ENCODE measurements at regions of chr20 and their contacts with region 1.

Region 1: DNA sequence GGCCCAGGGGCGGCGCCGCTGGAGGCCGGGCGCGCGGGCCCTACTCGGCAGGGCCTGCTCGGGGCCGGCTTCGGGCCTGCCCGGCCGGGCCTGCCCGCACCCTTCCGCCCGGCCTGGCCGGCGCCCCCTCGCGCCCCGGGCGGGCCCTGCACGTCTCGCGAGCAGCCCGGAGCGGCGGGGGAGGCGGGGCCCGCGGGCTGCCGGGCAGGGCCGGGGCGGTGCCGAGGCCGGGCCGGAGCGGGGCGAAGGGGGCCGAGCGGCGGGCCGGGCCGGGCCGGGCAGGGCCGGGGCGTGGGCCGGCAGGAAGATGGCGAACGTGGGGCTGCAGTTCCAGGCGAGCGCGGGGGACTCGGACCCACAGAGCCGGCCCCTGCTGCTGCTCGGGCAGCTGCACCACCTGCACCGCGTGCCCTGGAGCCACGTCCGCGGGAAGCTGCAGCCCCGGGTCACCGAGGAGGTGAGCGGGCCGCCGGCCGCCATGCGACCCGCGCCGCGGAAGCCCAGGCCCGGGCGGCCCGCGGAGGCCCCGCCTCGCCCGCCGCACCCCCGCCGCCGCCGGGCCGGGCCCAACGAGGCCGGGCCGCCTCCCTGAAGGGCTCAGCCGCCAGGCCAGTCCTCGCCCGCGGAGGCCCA is at the start of gene NPEPL1:
- DNase-seq: peak; percentile 74
- ATAC-seq: peak; percentile 98
- H3K4me3 Mint-ChIP-seq: peak within 1 kb of the TSS; percentile 75
- H3K27ac Mint-ChIP-seq: no peak within 1 kb of the TSS
- H3K4me1 Mint-ChIP-seq: peaks cover 7% of the 10 kb centered on the region
- H3K27me3 Mint-ChIP-seq: no peaks in the 10 kb centered on the region
- CTCF ChIP-seq: no peak
- total RNA-seq, gene NPEPL1: 18.7 and 21.5 TPM in 2 replicates

Region 2: GRCh38 chr20:58618351-58619076 is 74.2 kb before region 1 on chr20:
- CTCF ChIA-PET with region 1: no interaction called
- POLR2A ChIA-PET with region 1: interaction called, 11 read pairs
- intact Hi-C with region 1: no loop called
- DNase-seq: no peak
- ATAC-seq: no peak
- H3K4me3 Mint-ChIP-seq: no peak overlapping the region
- H3K27ac Mint-ChIP-seq: no peak overlapping the region
- H3K4me1 Mint-ChIP-seq: no peaks in the 10 kb centered on the region
- H3K27me3 Mint-ChIP-seq: peaks cover 27% of the 10 kb centered on the region
- CTCF ChIP-seq: no peak

Region 3: GRCh38 chr20:58716644-58717510 is 24.2 kb after region 1 on chr20:
- CTCF ChIA-PET with region 1: no interaction called
- POLR2A ChIA-PET with region 1: no interaction called
- intact Hi-C with region 1: no loop called
- DNase-seq: peak; percentile 13
- ATAC-seq: no peak
- H3K4me3 Mint-ChIP-seq: no peak overlapping the region
- H3K27ac Mint-ChIP-seq: no peak overlapping the region
- H3K4me1 Mint-ChIP-seq: peaks cover 3% of the 10 kb centered on the region
- H3K27me3 Mint-ChIP-seq: peaks cover 10% of the 10 kb centered on the region
- CTCF ChIP-seq: no peak

Region 4: DNA sequence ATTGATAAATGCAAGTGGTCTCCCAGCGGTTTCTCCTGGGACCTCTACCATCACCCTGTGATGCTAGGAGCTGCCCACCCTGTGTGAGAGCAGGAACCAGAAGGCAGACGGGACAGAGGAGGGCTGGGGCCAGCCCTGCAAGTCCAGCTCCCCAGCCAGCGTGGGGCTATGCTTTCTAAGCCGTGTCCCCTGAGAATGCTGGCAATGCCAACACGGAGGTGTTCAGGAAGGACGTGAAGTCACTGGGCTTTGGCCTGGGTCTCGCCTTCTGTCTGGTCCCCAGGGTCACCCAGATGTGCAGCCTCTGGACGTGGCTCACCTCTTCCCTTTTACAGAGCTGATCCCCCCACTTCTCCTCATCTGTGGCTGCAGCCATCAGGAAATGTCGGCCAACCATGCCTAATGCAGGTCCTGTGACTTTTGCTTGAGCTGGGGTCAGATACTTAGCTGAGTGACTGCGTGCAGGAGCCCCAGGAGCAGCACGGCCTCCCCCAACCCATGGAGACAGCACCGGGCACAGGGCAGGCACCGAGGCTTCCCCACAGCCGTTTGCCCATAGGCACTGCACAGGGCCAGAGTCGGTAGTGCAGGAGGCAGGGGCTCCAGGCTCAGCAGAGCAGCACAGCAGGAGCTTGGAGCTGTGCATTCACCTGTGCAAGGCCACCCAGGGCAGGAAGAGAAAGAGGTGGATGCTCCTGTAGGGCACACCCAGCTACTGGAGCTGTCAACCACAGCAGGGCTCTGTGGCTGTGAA is 91.8 kb after region 1 on chr20:
- CTCF ChIA-PET with region 1: no interaction called
- POLR2A ChIA-PET with region 1: interaction called, 13 read pairs
- intact Hi-C with region 1: no loop called
- DNase-seq: no peak
- ATAC-seq: no peak
- H3K4me3 Mint-ChIP-seq: no peak overlapping the region
- H3K27ac Mint-ChIP-seq: no peak overlapping the region
- H3K4me1 Mint-ChIP-seq: no peaks in the 10 kb centered on the region
- H3K27me3 Mint-ChIP-seq: peaks cover 36% of the 10 kb centered on the region
- CTCF ChIP-seq: no peak

Region 5: DNA sequence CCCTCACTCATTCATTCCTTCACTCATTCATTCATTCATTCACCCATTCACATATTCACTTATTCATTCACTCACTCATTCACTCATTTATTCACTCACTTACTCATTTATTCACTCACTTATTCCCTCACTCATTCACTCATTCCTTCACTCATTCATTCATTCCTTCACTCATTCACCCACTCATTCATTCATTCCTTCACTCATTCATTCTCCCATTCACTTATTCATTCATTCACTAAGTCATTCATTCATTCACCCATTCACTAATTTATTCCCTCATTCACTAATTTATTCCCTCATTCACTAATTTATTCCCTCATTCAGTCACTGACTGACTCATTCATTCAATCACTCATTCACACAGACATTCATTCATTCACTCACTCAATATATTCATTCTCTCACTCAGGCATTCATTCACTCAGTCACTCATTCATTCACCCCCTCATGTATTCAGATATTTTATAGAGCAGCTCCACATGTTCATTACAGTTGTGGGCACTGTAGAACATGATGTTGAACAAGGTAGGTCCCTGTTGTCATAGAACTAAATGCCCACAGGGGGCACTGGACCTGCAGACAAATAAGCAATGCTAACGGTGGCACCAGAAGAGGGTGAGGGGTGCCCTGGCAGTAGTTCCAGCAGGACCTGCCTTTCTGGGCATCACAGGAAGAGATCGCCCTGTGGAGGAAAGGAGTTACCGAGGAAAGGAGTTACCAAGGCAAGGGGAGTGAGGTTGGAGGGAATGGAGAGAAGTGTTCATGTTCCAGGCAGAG is 735.5 kb after region 1 on chr20:
- CTCF ChIA-PET with region 1: no interaction called
- POLR2A ChIA-PET with region 1: no interaction called
- intact Hi-C with region 1: no loop called
- DNase-seq: no peak
- ATAC-seq: no peak
- H3K4me3 Mint-ChIP-seq: no peak overlapping the region
- H3K27ac Mint-ChIP-seq: no peak overlapping the region
- H3K4me1 Mint-ChIP-seq: peaks cover 10% of the 10 kb centered on the region
- H3K27me3 Mint-ChIP-seq: peaks cover 8% of the 10 kb centered on the region
- CTCF ChIP-seq: no peak

Measured in activated B cell treated with CpG ODN at 0.5 μM for 24 hours (primary cell).